CD8-positive, alpha-beta T cell (primary cell): ENCODE measurements at regions of chr12 and their contacts with region 1.

Region 1: DNA sequence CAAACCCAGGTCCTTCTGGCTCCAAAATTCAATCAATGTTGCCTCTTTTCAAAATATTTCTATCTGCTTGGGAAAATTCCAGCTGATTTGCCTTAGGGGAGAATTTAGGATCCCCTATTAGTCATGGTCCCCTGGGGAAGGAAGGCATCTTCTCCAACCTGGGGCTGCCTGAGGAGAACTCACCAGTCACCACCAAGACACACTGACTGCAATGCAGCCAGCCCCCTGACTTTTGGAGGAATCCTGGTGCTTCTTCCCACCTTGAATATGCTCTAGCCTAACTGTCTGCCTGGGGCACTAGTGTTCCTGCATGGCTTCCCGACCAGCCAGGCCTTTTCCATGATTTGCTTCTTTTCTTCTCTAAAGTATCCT is 71.8 kb upstream of the BCL2L14 start:
- DNase-seq: no peak
- ATAC-seq: no peak
- H3K4me3 ChIP-seq: peak overlapping the region in 1 of 2 experiments; percentile 4
- H3K4me3 Mint-ChIP-seq: peak overlapping the region; percentile 5
- H3K27ac ChIP-seq: no peak overlapping the region
- H3K27ac Mint-ChIP-seq: peak overlapping the region; percentile 81
- H3K4me1 ChIP-seq: peaks cover 21% of the 10 kb centered on the region
- H3K4me1 Mint-ChIP-seq: peaks cover 29% of the 10 kb centered on the region
- H3K27me3 ChIP-seq: no peaks in the 10 kb centered on the region
- H3K27me3 Mint-ChIP-seq: no peaks in the 10 kb centered on the region
- CTCF ChIP-seq: no peak

Region 2: GRCh38 chr12:11981121-11981733 is 17.7 kb before region 1 on chr12:
- CTCF ChIA-PET with region 1: no interaction called
- POLR2A ChIA-PET with region 1: no interaction called
- intact Hi-C with region 1: loop called (anchors 1 kb)
- DNase-seq: peak in 8 of 9 experiments; percentile 9 to 92 (median 36)
- ATAC-seq: peak; percentile 86
- H3K4me3 ChIP-seq: peak overlapping the region in 1 of 2 experiments; percentile 13
- H3K4me3 Mint-ChIP-seq: peak overlapping the region; percentile 0
- H3K27ac ChIP-seq: peak overlapping the region in 1 of 2 experiments; percentile 69
- H3K27ac Mint-ChIP-seq: peak overlapping the region; percentile 86
- H3K4me1 ChIP-seq: peaks cover 24% of the 10 kb centered on the region
- H3K4me1 Mint-ChIP-seq: peaks cover 30% of the 10 kb centered on the region
- H3K27me3 ChIP-seq: no peaks in the 10 kb centered on the region
- H3K27me3 Mint-ChIP-seq: no peaks in the 10 kb centered on the region
- CTCF ChIP-seq: no peak